Psoas muscle (tissue), 8 donors: ENCODE measurements at regions of chr2 and their contacts with region 1.

Region 1: GRCh38 chr2:19851116-19851695 is 50.6 kb downstream of the TTC32 start:
- DNase-seq: no peak
- ATAC-seq: no peak
- H3K4me3 ChIP-seq: no peak overlapping the region
- H3K27ac ChIP-seq: no peak overlapping the region
- H3K4me1 ChIP-seq: peaks cover 7% of the 10 kb centered on the region
- H3K27me3 ChIP-seq: no peaks in the 10 kb centered on the region
- CTCF ChIP-seq: no peak

Region 2: DNA sequence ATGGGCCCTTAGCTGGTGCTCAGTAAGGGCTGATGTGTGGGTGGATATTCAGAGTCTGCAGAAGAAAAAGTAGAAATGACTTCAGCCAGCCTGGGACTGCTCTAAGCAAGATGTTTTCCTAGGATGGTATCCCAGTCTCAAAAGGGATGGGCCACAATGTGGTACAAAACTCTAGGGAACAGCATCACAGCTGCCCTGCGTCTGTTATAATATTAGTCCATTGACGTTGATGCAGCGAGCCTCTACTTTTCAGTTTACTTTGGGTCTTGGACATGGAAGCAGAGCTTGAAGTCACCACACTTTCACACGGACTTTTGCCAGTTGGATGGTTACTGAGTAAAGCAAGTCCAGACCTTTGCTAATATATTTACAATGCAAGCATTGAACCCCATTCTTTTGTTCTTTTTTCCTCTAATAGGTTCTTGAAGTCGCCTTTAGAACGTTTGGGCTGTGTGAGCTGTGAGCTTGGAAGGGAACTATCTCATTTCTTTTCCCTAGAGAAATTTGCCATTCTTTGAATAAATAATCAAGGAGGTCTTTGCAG is 1396.4 kb before region 1 on chr2:
- intact Hi-C with region 1: loop called in 1 of 2 experiments (anchors 5 kb)
- DNase-seq: no peak
- ATAC-seq: peak in 3 of 4 donors; percentile 9 to 54 (median 11)
- H3K4me3 ChIP-seq: no peak overlapping the region
- H3K27ac ChIP-seq: peak overlapping the region; percentile 54
- H3K4me1 ChIP-seq: peaks cover 16% of the 10 kb centered on the region
- H3K27me3 ChIP-seq: no peaks in the 10 kb centered on the region
- CTCF ChIP-seq: no peak

Region 3: DNA sequence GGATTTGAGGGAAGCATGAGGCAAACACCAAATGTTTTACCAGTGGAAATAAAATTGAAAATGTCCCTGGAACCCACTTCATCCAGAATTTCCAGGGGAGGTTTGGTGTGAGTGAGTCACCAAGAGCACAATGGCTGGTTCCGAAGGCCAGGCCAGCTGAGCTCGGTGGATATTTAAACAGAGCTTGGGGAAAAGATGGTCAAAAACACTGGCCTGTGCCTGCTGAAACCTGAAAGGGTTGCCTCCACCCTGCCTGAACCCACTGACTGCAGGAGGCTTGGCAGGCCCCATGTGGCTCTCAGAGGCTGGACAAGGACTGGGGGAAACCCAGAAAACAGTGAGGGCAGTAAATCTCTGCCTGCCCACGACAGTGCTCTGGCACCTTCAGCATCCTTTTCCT is 43.3 kb before region 1 on chr2:
- intact Hi-C with region 1: loop called in 1 of 2 experiments (anchors 5 kb)
- DNase-seq: no peak
- ATAC-seq: no peak
- H3K4me3 ChIP-seq: no peak overlapping the region
- H3K27ac ChIP-seq: no peak overlapping the region
- H3K4me1 ChIP-seq: peaks cover 5% of the 10 kb centered on the region
- H3K27me3 ChIP-seq: no peaks in the 10 kb centered on the region
- CTCF ChIP-seq: no peak

Region 4: GRCh38 chr2:19893520-19894133 is 42.4 kb after region 1 on chr2:
- intact Hi-C with region 1: no loop called
- DNase-seq: no peak
- ATAC-seq: no peak
- H3K4me3 ChIP-seq: no peak overlapping the region
- H3K27ac ChIP-seq: no peak overlapping the region
- H3K4me1 ChIP-seq: peaks cover 24% of the 10 kb centered on the region
- H3K27me3 ChIP-seq: no peaks in the 10 kb centered on the region
- CTCF ChIP-seq: no peak